Body of pancreas (tissue), 4 donors: ENCODE measurements at regions of chr7 and their contacts with region 1.

Region 1: GRCh38 chr7:27160546-27161213 is 4.2 kb upstream of the HOXA7 start:
- DNase-seq: peak; percentile 85 to 90 (median 86)
- ATAC-seq: peak; percentile 83
- H3K4me3 ChIP-seq: peak overlapping the region in 1 of 2 donors; percentile 44
- H3K27ac ChIP-seq: no peak overlapping the region
- H3K4me1 ChIP-seq: peaks cover 31% of the 10 kb centered on the region
- H3K27me3 ChIP-seq: peaks cover 0 to 64% of the 10 kb centered on the region in 2 donors
- CTCF ChIP-seq: peak; percentile 95 to 100 (median 97)
- POLR2A ChIP-seq: no peak

Region 2: GRCh38 chr7:26853788-26854393 is 306.8 kb before region 1 on chr7:
- intact Hi-C with region 1: loop called (anchors 10 kb)
- DNase-seq: no peak
- ATAC-seq: no peak
- H3K4me3 ChIP-seq: no peak overlapping the region
- H3K27ac ChIP-seq: no peak overlapping the region
- H3K4me1 ChIP-seq: no peaks in the 10 kb centered on the region
- H3K27me3 ChIP-seq: no peaks in the 10 kb centered on the region
- CTCF ChIP-seq: peak in 6 of 7 experiments; percentile 22 to 51 (median 48)
- POLR2A ChIP-seq: no peak